ENCODE measurements at regions of chr7 and their contacts with region 1.

Region 1: DNA sequence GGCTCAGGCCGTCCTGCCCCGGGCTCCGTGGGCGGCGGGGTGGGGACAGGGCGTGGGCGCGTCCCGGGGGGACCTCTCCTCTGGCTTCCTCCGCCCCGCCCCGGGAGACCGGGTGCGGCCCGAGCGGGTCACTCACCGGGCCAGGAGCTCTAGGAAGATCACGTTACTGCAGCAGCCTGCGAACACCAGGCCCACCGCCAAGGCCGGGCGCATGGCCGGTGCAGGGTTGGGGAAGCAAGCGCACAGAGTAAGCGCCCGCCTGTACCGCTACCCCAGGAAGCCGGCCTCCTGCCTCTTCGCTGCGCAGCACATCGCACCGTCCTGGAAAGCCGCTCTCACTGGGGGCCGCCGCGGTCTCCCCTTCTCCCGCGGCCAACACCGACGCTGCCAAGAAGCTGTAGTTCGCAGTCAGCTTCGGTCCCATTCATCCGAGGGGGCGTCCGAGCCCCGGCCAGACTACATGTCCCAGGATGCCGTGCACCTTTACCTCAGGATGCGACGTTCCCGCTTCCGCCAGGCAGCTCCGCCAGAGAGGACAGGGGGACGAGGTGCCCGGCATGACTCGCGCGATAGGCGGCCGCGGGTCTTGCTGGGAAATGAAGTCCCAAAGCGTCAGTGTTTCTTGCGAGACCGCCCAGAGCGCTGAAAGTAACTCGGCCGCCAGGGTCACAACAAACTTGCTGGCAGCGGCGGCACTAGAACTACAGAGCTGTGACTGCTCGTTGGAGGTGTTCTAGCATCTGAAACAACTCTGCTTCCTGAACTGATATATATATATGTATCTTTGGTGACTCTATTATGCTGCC is at the start of gene SLC35B4:
- DNase-seq: peak; percentile 87 to 89 (median 89)
- H3K4me3 ChIP-seq: peak within 1 kb of the TSS; percentile 94 to 99 (median 97)
- H3K4me3 Mint-ChIP-seq: peak within 1 kb of the TSS; percentile 94
- H3K27ac ChIP-seq: peak within 1 kb of the TSS; percentile 51 to 79
- H3K27ac Mint-ChIP-seq: peak within 1 kb of the TSS in 6 of 7 donors; percentile 73 to 94 (median 90)
- H3K4me1 ChIP-seq: peaks cover 13 to 16% of the 10 kb centered on the region in 2 donors
- H3K4me1 Mint-ChIP-seq: peaks cover 18% of the 10 kb centered on the region
- H3K27me3 ChIP-seq: no peaks in the 10 kb centered on the region
- H3K27me3 Mint-ChIP-seq: peaks cover 5 to 8% (median 7%) of the 10 kb centered on the region in 3 donors
- CTCF ChIP-seq: no peak
- polyA plus RNA-seq, gene SLC35B4: 9.4 to 21.1 (median 12.7) TPM

Region 2: GRCh38 chr7:133081599-133082389 is 1234.9 kb before region 1 on chr7 and contains the start of gene CHCHD3:
- intact Hi-C with region 1: loop called in 1 of 2 experiments (anchors 10 kb)
- DNase-seq: peak; percentile 93 to 98 (median 93)
- H3K4me3 ChIP-seq: peak within 1 kb of the TSS; percentile 62 to 93 (median 91)
- H3K4me3 Mint-ChIP-seq: peak within 1 kb of the TSS; percentile 90 to 93
- H3K27ac ChIP-seq: peak within 1 kb of the TSS; percentile 56 to 95
- H3K27ac Mint-ChIP-seq: peak within 1 kb of the TSS; percentile 90 to 98 (median 95)
- H3K4me1 ChIP-seq: peaks cover 9 to 14% of the 10 kb centered on the region in 2 donors
- H3K4me1 Mint-ChIP-seq: peaks cover 18% of the 10 kb centered on the region
- H3K27me3 ChIP-seq: no peaks in the 10 kb centered on the region
- H3K27me3 Mint-ChIP-seq: peaks cover 0 to 3% (median 0%) of the 10 kb centered on the region in 3 donors
- CTCF ChIP-seq: no peak
- polyA plus RNA-seq, gene CHCHD3: 30.5 to 56.7 (median 48.8) TPM

Region 3: GRCh38 chr7:133252858-133253518 is 1063.8 kb before region 1 on chr7 and contains the start of gene EXOC4:
- intact Hi-C with region 1: loop called (anchors 10 kb)
- DNase-seq: peak; percentile 96 to 98 (median 96)
- H3K4me3 ChIP-seq: peak within 1 kb of the TSS; percentile 85 to 91 (median 91)
- H3K4me3 Mint-ChIP-seq: peak within 1 kb of the TSS; percentile 84 to 91
- H3K27ac ChIP-seq: peak within 1 kb of the TSS; percentile 65 to 96
- H3K27ac Mint-ChIP-seq: peak within 1 kb of the TSS; percentile 87 to 99 (median 97)
- H3K4me1 ChIP-seq: peaks cover 27 to 33% of the 10 kb centered on the region in 2 donors
- H3K4me1 Mint-ChIP-seq: peaks cover 30% of the 10 kb centered on the region
- H3K27me3 ChIP-seq: no peaks in the 10 kb centered on the region
- H3K27me3 Mint-ChIP-seq: no peaks in the 10 kb centered on the region
- CTCF ChIP-seq: no peak
- polyA plus RNA-seq, gene EXOC4: 20.6 to 22.3 (median 22.3) TPM

Region 4: GRCh38 chr7:134126966-134127848 is 189.5 kb before region 1 on chr7 and contains the start of gene LRGUK:
- intact Hi-C with region 1: loop called in 1 of 2 experiments (anchors 5 kb)
- DNase-seq: peak; percentile 66 to 79 (median 73)
- H3K4me3 ChIP-seq: peak within 1 kb of the TSS; percentile 48 to 86 (median 65)
- H3K4me3 Mint-ChIP-seq: peak within 1 kb of the TSS; percentile 83 to 96
- H3K27ac ChIP-seq: no peak within 1 kb of the TSS
- H3K27ac Mint-ChIP-seq: peak within 1 kb of the TSS in 3 of 7 donors; percentile 41 to 73 (median 64)
- H3K4me1 ChIP-seq: peaks cover 28 to 32% of the 10 kb centered on the region in 2 donors
- H3K4me1 Mint-ChIP-seq: peaks cover 28% of the 10 kb centered on the region
- H3K27me3 ChIP-seq: peaks cover 0 to 2% of the 10 kb centered on the region in 2 donors
- H3K27me3 Mint-ChIP-seq: peaks cover 2 to 6% (median 5%) of the 10 kb centered on the region in 3 donors
- CTCF ChIP-seq: no peak
- polyA plus RNA-seq, gene LRGUK: 0.41 TPM in 1 of 3 donors, not detected in the others

Measured in CD14-positive monocyte (primary cell).